Naive thymus-derived CD8-positive, alpha-beta T cell (primary cell): ENCODE measurements at regions of chr16 and their contacts with region 1.

Region 1: DNA sequence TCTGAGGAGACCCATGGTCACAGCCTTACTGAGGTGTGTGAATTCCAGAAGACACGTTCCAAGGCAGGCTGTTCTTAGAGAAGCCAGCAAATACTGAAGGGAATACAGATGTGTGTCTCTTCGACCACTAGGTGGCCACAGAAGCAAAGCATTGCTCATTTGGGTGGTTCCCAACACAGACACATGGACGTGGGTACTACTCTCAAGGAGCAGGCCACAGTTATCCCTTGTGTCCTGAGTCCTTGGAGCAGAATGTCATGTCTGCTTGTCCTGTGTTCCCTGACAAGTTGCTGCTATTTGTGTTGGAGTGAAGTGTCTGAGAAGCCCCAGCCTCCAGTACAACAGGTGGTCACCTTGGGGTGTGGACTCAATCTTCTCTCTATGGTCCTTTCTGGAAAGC is 30.3 kb downstream of the HMOX2 start:
- DNase-seq: peak in 9 of 10 donors; percentile 44 to 78 (median 58)
- ATAC-seq: peak; percentile 27 to 33
- H3K4me3 Mint-ChIP-seq: peak overlapping the region; percentile 64 to 87 (median 80)
- H3K27ac Mint-ChIP-seq: peak overlapping the region; percentile 95 to 100 (median 99)
- H3K4me1 Mint-ChIP-seq: peaks cover 36 to 70% (median 65%) of the 10 kb centered on the region in 4 donors
- H3K27me3 Mint-ChIP-seq: no peaks in the 10 kb centered on the region

Region 2: DNA sequence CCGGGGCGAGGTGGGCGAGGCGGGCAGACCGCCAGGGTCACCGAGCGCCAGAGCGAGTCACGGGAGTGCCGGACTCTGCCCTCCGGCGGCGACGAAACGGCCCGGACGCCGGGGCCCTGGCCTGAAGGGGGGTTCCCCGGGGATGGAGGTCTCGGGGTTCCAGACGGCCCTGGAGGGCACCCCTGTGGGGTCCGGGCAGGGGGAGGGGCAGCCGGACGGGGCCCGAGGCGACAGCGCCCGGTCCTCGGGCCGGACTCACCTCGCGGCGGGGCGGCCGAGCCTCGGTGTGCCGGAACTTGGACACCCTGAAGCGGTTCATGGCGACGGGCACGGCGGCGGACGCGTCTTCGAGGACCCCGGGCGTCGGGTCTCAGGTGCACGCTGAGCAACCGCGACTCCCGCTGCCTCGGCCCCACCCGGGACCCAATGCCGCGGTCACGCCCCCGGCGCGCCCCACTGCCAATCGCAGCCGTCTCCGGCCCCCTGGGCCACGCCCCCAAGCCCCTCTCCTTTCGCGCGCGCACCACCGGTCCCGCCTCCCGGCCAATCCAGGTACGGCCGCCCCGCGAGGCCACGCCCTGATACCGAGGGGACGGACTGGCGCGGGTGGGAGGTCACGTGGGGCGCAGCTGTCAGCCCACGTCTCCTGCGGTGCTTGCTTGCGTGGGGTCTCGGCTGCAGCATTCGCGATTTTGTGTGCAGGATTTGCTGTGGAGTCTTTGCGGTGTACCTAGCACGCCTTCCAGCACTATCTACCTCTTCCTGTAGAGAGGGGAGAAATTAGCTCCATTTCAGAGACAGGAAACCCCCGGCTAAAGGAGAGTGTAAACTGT is 90.0 kb before region 1 on chr16 and contains the start of gene CORO7:
- POLR2A ChIA-PET with region 1: interaction called, 20 read pairs
- DNase-seq: peak; percentile 98 to 100 (median 100)
- ATAC-seq: peak; percentile 68 to 69
- H3K4me3 Mint-ChIP-seq: peak within 1 kb of the TSS; percentile 92 to 99 (median 96)
- H3K27ac Mint-ChIP-seq: peak within 1 kb of the TSS; percentile 92 to 100 (median 99)
- H3K4me1 Mint-ChIP-seq: peaks cover 17 to 43% (median 34%) of the 10 kb centered on the region in 4 donors
- H3K27me3 Mint-ChIP-seq: no peaks in the 10 kb centered on the region
- polyA plus RNA-seq, gene CORO7: 44.6 to 79.9 (median 45.5) TPM

Region 3: GRCh38 chr16:4487955-4488498 is 18.4 kb before region 1 on chr16:
- POLR2A ChIA-PET with region 1: interaction called, 207 read pairs
- DNase-seq: peak in 1 of 10 donors; percentile 38
- ATAC-seq: peak; percentile 42 to 47
- H3K4me3 Mint-ChIP-seq: peak overlapping the region; percentile 54 to 78 (median 74)
- H3K27ac Mint-ChIP-seq: peak overlapping the region; percentile 91 to 99 (median 96)
- H3K4me1 Mint-ChIP-seq: peaks cover 22 to 79% (median 65%) of the 10 kb centered on the region in 4 donors
- H3K27me3 Mint-ChIP-seq: no peaks in the 10 kb centered on the region

Region 4: GRCh38 chr16:4529085-4530060 is 22.9 kb after region 1 on chr16:
- POLR2A ChIA-PET with region 1: interaction called, 10 read pairs
- DNase-seq: no peak
- ATAC-seq: peak; percentile 76 to 77
- H3K4me3 Mint-ChIP-seq: peak overlapping the region in 9 of 10 donors; percentile 42 to 82 (median 74)
- H3K27ac Mint-ChIP-seq: peak overlapping the region; percentile 49 to 95 (median 87)
- H3K4me1 Mint-ChIP-seq: peaks cover 23 to 69% (median 49%) of the 10 kb centered on the region in 4 donors
- H3K27me3 Mint-ChIP-seq: no peaks in the 10 kb centered on the region

Region 5: DNA sequence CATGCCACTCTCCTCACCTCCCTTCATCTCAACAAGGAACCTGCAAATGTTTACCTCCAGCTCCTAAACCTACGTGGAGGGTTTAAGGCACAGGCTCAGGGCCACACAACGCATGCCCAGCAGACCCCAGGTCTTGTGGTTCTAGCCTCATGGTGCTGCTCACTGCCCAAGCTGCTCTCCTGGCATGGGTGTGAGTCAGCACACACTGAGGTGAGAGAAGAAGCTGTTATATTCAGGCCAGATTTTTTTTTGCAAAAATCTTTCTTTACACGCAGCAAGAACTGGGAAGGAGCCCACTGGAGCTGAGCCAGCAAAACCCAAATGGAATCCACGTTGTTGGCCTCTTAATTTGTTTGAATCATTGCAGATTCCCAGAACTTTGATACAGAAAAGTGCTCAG is 44.1 kb after region 1 on chr16:
- POLR2A ChIA-PET with region 1: interaction called, 25 read pairs
- DNase-seq: no peak
- ATAC-seq: no peak
- H3K4me3 Mint-ChIP-seq: no peak overlapping the region
- H3K27ac Mint-ChIP-seq: peak overlapping the region in 2 of 10 donors; percentile 26 to 70
- H3K4me1 Mint-ChIP-seq: peaks cover 2 to 9% (median 6%) of the 10 kb centered on the region in 4 donors
- H3K27me3 Mint-ChIP-seq: no peaks in the 10 kb centered on the region